Activated CD8-positive, alpha-beta memory T cell treated with anti-CD3 and anti-CD28 coated beads, Interleukin-2, amount 10 ng/mL, durations not matched to agents 7 days and 5 days (primary cell): ENCODE measurements at regions of chr17 and their contacts with region 1.

Region 1: GRCh38 chr17:7561028-7561575 is 617 bp upstream of the SENP3 start:
- DNase-seq: peak; percentile 91
- ATAC-seq: peak; percentile 75
- H3K4me3 Mint-ChIP-seq: peak overlapping the region; percentile 85
- H3K27ac Mint-ChIP-seq: peak overlapping the region; percentile 92
- H3K4me1 Mint-ChIP-seq: peaks cover 51% of the 10 kb centered on the region
- H3K27me3 Mint-ChIP-seq: no peaks in the 10 kb centered on the region

Region 2: DNA sequence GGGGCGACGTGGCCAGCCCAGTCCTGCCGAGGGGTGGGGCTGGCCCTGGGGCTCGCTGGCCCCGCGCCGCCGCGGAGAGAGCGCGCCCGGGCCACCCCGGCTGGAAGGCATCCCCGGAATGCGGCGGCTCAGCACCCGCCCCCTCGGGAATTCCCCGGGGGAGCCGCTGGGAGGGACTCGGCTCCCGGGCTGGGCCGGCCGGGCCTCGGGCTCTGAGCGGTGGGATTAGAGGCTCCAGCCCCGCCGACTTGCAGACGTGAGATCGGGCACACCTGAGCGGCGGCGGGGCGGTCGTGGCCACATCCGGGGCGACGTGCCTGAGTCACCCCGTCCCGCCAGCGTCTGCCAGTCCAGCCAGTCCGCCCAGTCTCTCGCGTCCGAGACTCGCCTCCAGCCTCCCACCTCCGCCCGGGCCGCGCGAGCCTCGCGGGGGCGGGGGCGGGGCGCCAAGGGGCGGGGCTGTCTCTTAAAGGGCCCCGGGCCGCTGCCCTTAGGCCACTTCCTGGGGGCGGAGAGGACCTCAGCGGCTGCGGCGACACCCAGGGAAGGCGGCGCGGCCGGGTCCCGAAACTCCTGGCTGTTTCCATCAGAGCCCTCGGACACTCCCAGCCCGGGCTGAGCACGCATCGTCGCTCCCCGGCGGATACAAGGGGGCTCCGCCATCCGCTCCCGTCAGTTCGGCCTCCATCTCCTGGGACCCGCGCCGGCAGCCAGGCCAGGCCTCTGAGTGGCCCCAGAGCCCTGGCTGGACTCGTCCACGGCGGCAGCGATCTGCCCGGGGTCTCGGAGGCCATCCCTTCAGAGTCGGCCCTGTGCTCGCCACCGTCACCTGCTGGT is 209.2 kb before region 1 on chr17 and contains the start of gene KCTD11:
- CTCF ChIA-PET with region 1: interaction called, 41 read pairs
- DNase-seq: peak; percentile 91
- ATAC-seq: peak; percentile 69
- H3K4me3 Mint-ChIP-seq: peak within 1 kb of the TSS; percentile 78
- H3K27ac Mint-ChIP-seq: peak within 1 kb of the TSS; percentile 86
- H3K4me1 Mint-ChIP-seq: peaks cover 56% of the 10 kb centered on the region
- H3K27me3 Mint-ChIP-seq: no peaks in the 10 kb centered on the region
- total RNA-seq, gene KCTD11: 6.0 to 6.1 TPM

Region 3: GRCh38 chr17:7444682-7445618 is 116.2 kb before region 1 on chr17 and contains the start of gene CHRNB1:
- CTCF ChIA-PET with region 1: interaction called, 10 read pairs
- DNase-seq: no peak
- ATAC-seq: peak; percentile 40
- H3K4me3 Mint-ChIP-seq: peak within 1 kb of the TSS; percentile 60
- H3K27ac Mint-ChIP-seq: no peak within 1 kb of the TSS
- H3K4me1 Mint-ChIP-seq: peaks cover 22% of the 10 kb centered on the region
- H3K27me3 Mint-ChIP-seq: peaks cover 59% of the 10 kb centered on the region
- total RNA-seq, gene CHRNB1: 10.4 to 13.1 TPM

Region 4: GRCh38 chr17:7509937-7510336 is 51.2 kb before region 1 on chr17:
- CTCF ChIA-PET with region 1: interaction called, 172 read pairs
- DNase-seq: no peak
- ATAC-seq: no peak
- H3K4me3 Mint-ChIP-seq: no peak overlapping the region
- H3K27ac Mint-ChIP-seq: no peak overlapping the region
- H3K4me1 Mint-ChIP-seq: no peaks in the 10 kb centered on the region
- H3K27me3 Mint-ChIP-seq: no peaks in the 10 kb centered on the region

Region 5: DNA sequence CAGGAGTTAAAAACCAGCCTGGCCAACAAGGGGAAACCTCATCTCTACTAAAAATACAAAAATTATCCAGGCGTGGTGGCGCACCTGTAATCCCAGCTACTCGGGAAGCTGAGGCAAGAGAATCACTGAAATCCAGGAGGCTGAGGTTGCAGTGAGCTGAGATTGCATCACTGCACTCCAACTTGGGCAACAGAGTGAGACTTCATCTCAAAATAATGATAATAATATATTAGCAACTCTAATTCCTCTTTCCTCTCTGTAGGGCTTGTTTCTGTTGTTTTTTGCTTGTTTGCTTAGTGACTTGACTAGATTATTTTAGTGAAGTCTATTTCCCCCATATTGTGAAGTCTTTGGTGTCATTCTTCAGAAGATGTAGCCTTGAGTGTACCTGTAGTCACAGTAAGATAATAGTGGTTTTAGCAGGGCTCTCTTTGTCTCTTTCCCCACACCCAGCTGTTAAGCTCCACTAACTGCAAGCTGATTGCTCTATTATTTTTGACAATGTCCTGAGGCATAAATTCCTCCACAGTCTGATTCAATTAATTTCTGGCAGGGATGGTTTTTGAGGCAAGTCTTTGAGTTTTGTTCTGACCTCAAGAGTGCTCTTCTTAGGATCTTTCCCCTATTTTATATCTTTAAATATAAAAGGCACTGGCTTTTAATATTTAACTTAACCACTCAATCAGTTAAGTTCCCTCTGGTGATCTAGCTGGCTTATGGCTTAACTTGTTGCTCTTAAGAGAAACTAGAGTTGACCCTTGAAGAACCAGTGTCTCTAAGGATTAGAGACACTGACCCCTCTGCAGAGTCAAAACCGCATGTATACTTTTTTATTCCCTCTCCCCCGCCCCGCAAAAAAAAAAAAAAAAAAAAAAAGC is 30.8 kb before region 1 on chr17:
- CTCF ChIA-PET with region 1: interaction called, 21 read pairs
- DNase-seq: no peak
- ATAC-seq: no peak
- H3K4me3 Mint-ChIP-seq: no peak overlapping the region
- H3K27ac Mint-ChIP-seq: no peak overlapping the region
- H3K4me1 Mint-ChIP-seq: no peaks in the 10 kb centered on the region
- H3K27me3 Mint-ChIP-seq: no peaks in the 10 kb centered on the region

Region 6: GRCh38 chr17:7583253-7584109 is 22.4 kb after region 1 on chr17 and contains the start of gene MPDU1:
- CTCF ChIA-PET with region 1: interaction called, 30 read pairs
- DNase-seq: peak; percentile 97
- ATAC-seq: peak; percentile 81
- H3K4me3 Mint-ChIP-seq: peak within 1 kb of the TSS; percentile 84
- H3K27ac Mint-ChIP-seq: peak within 1 kb of the TSS; percentile 99
- H3K4me1 Mint-ChIP-seq: peaks cover 62% of the 10 kb centered on the region
- H3K27me3 Mint-ChIP-seq: no peaks in the 10 kb centered on the region
- total RNA-seq, gene MPDU1: 57.6 to 76.9 TPM